ENCODE measurements at regions of chr14 and their contacts with region 1.

Region 1: GRCh38 chr14:67619446-67620216 is at the start of gene ARG2:
- DNase-seq: peak; percentile 96
- H3K4me3 Mint-ChIP-seq: peak within 1 kb of the TSS; percentile 83
- H3K27ac Mint-ChIP-seq: peak within 1 kb of the TSS; percentile 84
- H3K4me1 Mint-ChIP-seq: peaks cover 30% of the 10 kb centered on the region
- H3K27me3 Mint-ChIP-seq: no peaks in the 10 kb centered on the region
- CTCF ChIP-seq: no peak
- total RNA-seq, gene ARG2: 11.7 and 17.6 TPM in 2 replicates

Region 2: DNA sequence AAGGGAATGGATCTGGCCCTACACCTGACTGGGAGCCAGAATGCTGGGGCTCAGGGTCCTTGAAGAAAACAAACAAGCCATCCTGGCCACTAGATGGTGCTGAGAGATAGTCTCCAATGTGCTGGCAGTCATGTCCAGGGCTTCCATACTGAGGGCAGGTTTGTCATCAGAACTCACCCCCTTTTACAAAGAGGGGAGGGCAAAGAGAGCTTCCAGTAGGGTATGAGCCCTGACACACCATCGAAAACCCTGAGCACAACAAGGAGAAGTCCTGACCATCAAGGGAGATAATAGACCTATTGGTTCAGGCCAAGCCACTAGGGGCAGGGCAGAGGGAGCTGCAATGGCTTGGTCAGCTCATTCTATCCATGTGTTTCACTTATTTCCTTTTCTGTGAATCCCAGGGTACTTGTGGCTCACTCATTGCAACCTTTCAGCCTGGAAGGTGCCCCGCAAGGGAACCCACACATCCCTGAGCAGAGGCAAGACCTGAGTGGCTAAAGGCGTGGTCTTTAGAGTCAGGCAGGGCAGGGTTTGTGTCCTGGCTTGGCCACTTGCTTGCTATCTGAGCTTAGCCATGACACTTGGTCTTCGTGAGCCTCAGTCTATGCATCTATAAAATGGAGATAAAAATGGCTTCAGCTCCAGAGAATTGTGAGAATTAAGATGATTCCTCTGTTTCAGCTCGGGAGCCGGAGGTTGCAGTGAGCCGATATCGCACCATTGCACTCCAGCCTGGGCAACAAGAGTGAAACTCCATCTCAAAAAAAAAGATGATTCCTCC is 92.8 kb before region 1 on chr14:
- CTCF ChIA-PET with region 1: interaction called, 10 read pairs
- POLR2A ChIA-PET with region 1: no interaction called
- intact Hi-C with region 1: no loop called
- DNase-seq: peak; percentile 69
- H3K4me3 Mint-ChIP-seq: no peak overlapping the region
- H3K27ac Mint-ChIP-seq: no peak overlapping the region
- H3K4me1 Mint-ChIP-seq: no peaks in the 10 kb centered on the region
- H3K27me3 Mint-ChIP-seq: peaks cover 37% of the 10 kb centered on the region
- CTCF ChIP-seq: peak; percentile 65

Region 3: DNA sequence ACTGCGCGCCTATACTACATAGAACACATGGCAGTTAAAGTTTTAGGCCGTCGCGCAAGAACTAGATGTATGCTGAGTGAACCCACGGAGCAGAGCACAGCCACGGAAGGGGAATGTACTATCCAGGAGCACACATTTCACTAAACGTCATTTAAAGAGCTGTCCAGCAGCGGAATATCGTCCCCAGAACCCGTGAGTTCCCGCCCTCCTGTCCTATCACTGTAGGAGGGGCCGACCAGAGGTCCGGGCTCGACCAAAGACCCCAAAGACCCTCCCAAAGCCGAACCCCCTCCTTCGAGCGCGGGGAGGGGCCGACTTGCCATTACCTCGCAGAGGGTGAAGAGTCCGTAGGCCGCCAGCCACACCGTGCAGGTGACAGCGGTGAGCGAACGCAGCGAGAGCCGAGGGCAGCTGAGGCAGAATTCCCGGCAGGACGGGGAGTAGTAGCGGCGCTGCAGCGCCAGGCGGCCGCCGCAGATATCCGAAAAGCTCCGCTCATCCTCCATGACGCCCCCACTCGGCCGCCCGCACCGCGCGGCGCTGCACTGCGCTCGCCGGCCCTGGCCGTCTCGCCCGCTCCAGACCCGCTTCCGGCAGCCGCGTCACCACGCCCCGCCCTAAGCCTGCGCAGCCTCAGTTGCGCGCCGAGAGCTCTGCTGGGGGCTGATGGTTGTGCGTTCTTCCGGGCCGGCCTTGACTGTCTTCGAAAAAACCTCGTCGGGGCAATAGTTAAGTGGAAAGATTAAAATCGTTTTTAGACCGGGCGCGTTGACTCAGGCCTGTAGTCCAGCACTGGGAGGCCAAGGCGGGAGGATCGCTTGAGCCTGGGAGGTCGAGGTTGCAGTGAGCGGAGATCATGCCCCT is 19.7 kb before region 1 on chr14 and contains the start of gene PIGH:
- CTCF ChIA-PET with region 1: interaction called, 17 read pairs
- POLR2A ChIA-PET with region 1: interaction called, 23 read pairs
- intact Hi-C with region 1: no loop called
- DNase-seq: peak; percentile 81
- H3K4me3 Mint-ChIP-seq: peak within 1 kb of the TSS; percentile 96
- H3K27ac Mint-ChIP-seq: peak within 1 kb of the TSS; percentile 79
- H3K4me1 Mint-ChIP-seq: peaks cover 13% of the 10 kb centered on the region
- H3K27me3 Mint-ChIP-seq: no peaks in the 10 kb centered on the region
- CTCF ChIP-seq: peak; percentile 60
- total RNA-seq, gene PIGH: 13.8 and 18.9 TPM in 2 replicates

Region 4: DNA sequence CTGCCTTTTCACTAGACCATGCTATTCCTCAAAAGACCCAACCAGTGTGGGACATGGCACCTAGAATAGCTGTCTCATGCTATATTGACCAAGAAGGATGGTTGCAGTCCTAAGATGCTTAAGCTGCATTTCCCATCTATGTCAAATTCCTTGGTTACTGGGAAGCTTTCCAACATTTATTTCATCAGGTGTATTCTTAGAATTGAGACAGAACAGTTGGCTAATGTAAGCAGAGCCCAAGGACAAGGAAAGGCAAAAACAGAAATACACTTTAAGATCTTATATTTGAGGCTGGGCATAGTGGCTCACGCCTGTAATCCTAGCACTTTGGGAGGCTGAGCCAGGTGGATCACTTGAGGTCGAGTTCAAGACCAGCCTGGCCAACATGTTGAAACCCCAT is 24.8 kb after region 1 on chr14:
- CTCF ChIA-PET with region 1: interaction called, 14 read pairs
- POLR2A ChIA-PET with region 1: interaction called, 7 read pairs
- intact Hi-C with region 1: no loop called
- DNase-seq: peak; percentile 20
- H3K4me3 Mint-ChIP-seq: no peak overlapping the region
- H3K27ac Mint-ChIP-seq: no peak overlapping the region
- H3K4me1 Mint-ChIP-seq: peaks cover 5% of the 10 kb centered on the region
- H3K27me3 Mint-ChIP-seq: no peaks in the 10 kb centered on the region
- CTCF ChIP-seq: no peak

Region 5: DNA sequence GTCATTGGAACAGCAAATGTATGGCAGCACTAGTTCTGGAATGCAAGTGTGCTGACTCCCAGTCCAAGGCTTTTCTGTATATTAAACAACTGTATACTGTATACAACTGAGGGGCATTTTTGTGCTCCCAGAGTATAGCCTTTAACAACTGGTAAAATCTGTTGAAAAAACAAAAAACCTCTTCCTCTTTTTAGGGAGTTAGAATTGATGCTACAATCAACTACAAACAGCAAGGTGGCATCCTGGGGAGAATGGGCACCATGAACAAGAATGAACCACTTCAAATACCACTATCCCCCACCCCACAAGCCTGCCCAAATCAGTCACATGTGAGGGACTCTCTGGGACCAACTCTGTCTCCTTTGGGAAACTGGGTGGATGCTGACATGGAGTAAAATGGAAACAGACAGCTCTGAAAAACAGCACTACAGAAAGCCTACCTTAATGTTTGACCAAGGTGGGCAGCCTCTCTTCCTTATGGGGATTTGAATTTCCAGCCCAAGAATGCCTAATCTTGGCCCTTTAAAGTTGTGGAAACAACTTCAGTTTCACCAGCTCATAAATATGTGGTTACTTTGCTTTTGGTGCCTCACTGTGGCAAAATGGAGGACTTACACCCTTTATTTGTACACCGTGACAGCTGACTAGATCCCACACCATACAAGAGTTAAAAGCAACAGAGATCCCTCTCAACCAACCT is 47.3 kb after region 1 on chr14:
- CTCF ChIA-PET with region 1: interaction called, 68 read pairs
- POLR2A ChIA-PET with region 1: interaction called, 37 read pairs
- intact Hi-C with region 1: loop called (anchors 1 kb)
- DNase-seq: peak; percentile 72
- H3K4me3 Mint-ChIP-seq: no peak overlapping the region
- H3K27ac Mint-ChIP-seq: peak overlapping the region; percentile 27
- H3K4me1 Mint-ChIP-seq: peaks cover 17% of the 10 kb centered on the region
- H3K27me3 Mint-ChIP-seq: no peaks in the 10 kb centered on the region
- CTCF ChIP-seq: peak; percentile 73

Region 6: GRCh38 chr14:67695394-67695949 is 75.8 kb after region 1 on chr14 and contains the start of gene RDH11:
- CTCF ChIA-PET with region 1: interaction called, 20 read pairs
- POLR2A ChIA-PET with region 1: interaction called, 12 read pairs
- intact Hi-C with region 1: loop called (anchors 1 kb)
- DNase-seq: peak; percentile 95
- H3K4me3 Mint-ChIP-seq: peak within 1 kb of the TSS; percentile 81
- H3K27ac Mint-ChIP-seq: peak within 1 kb of the TSS; percentile 46
- H3K4me1 Mint-ChIP-seq: peaks cover 7% of the 10 kb centered on the region
- H3K27me3 Mint-ChIP-seq: no peaks in the 10 kb centered on the region
- CTCF ChIP-seq: no peak
- total RNA-seq, gene RDH11: 40.9 and 53.5 TPM in 2 replicates

Region 7: DNA sequence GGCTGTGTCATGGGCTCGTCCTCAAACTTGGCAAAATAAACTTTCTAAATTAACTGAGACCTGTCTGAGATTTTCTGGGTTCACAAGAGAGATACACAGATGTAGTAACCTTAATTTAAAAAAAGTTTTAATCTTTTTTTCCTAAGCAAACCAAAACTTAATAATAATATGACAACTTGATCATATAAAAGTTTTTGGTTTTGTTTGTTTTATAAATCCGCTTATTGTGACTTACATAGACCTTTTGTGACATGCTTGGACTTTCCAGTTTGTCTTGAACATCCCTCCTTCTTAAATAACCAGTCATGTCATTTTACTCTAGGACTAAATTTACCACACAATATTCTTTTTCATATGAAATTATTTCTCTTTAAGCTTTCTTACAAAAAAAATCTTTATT is 90.6 kb after region 1 on chr14:
- CTCF ChIA-PET with region 1: interaction called, 38 read pairs
- POLR2A ChIA-PET with region 1: interaction called, 5 read pairs
- intact Hi-C with region 1: no loop called
- DNase-seq: peak; percentile 28
- H3K4me3 Mint-ChIP-seq: no peak overlapping the region
- H3K27ac Mint-ChIP-seq: no peak overlapping the region
- H3K4me1 Mint-ChIP-seq: no peaks in the 10 kb centered on the region
- H3K27me3 Mint-ChIP-seq: no peaks in the 10 kb centered on the region
- CTCF ChIP-seq: no peak

Measured in MCF 10A (cell line).